ENCODE measurements at regions of chr6 and their contacts with region 1.

Region 1: DNA sequence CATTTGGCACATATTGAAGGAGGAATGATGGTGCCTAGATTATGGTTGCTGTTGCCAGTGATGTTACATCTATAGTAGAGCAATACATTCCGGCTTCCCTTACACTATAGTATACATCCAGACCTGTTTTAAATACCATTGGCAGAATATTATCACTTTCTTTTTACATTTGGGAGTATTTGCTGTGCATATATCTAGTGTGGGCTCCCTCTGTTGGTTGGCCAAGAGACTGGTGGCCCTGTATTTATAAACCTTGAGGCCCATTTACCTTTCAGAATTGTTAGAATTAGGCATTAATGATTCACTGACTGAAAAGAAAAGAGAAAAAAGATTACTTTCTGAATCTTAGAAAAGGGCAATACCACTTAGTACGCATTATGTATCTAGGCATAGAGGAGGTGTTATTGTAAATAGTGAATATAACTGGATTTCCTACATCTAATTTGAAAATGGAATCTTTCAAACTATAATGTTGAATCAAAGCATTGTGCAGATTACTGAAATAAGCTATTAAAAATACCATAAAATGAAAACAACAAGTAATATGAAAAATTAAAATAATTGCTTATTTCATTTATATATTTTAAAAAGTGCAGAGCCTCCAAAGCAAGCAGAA is 628.8 kb upstream of the MAN1A1 start:
- DNase-seq: peak; percentile 17
- H3K4me3 ChIP-seq: no peak overlapping the region
- H3K27ac ChIP-seq: no peak overlapping the region
- H3K4me1 ChIP-seq: no peaks in the 10 kb centered on the region
- H3K27me3 ChIP-seq: no peaks in the 10 kb centered on the region
- CTCF ChIP-seq: peak; percentile 57 to 77

Region 2: GRCh38 chr6:119848696-119849095 is 129.7 kb before region 1 on chr6:
- CTCF ChIA-PET with region 1: no interaction called
- dilution Hi-C with region 1: no loop called
- in situ Hi-C with region 1: no loop called
- intact Hi-C with region 1: no loop called
- DNase-seq: no peak
- H3K4me3 ChIP-seq: no peak overlapping the region
- H3K27ac ChIP-seq: no peak overlapping the region
- H3K4me1 ChIP-seq: no peaks in the 10 kb centered on the region
- H3K27me3 ChIP-seq: no peaks in the 10 kb centered on the region
- CTCF ChIP-seq: no peak

Region 3: GRCh38 chr6:120077489-120077888 is 99.1 kb after region 1 on chr6:
- CTCF ChIA-PET with region 1: no interaction called
- dilution Hi-C with region 1: no loop called
- in situ Hi-C with region 1: no loop called
- intact Hi-C with region 1: loop called (anchors 2 kb)
- DNase-seq: peak; percentile 8
- H3K4me3 ChIP-seq: no peak overlapping the region
- H3K27ac ChIP-seq: no peak overlapping the region
- H3K4me1 ChIP-seq: no peaks in the 10 kb centered on the region
- H3K27me3 ChIP-seq: no peaks in the 10 kb centered on the region
- CTCF ChIP-seq: peak; percentile 34 to 69

Measured in mammary epithelial cell (primary cell).